Activated naive CD4-positive, alpha-beta T cell treated with anti-CD3 and anti-CD28 coated beads for 36 hours (primary cell): ENCODE measurements at regions of chr7 and their contacts with region 1.

Region 1: GRCh38 chr7:87345166-87345927 is at the start of gene CROT:
- DNase-seq: peak; percentile 97
- H3K4me3 Mint-ChIP-seq: peak within 1 kb of the TSS; percentile 89
- H3K27ac Mint-ChIP-seq: peak within 1 kb of the TSS; percentile 86
- H3K4me1 Mint-ChIP-seq: peaks cover 32% of the 10 kb centered on the region
- H3K27me3 Mint-ChIP-seq: no peaks in the 10 kb centered on the region
- total RNA-seq, gene CROT: 6.0 to 6.1 TPM

Region 2: DNA sequence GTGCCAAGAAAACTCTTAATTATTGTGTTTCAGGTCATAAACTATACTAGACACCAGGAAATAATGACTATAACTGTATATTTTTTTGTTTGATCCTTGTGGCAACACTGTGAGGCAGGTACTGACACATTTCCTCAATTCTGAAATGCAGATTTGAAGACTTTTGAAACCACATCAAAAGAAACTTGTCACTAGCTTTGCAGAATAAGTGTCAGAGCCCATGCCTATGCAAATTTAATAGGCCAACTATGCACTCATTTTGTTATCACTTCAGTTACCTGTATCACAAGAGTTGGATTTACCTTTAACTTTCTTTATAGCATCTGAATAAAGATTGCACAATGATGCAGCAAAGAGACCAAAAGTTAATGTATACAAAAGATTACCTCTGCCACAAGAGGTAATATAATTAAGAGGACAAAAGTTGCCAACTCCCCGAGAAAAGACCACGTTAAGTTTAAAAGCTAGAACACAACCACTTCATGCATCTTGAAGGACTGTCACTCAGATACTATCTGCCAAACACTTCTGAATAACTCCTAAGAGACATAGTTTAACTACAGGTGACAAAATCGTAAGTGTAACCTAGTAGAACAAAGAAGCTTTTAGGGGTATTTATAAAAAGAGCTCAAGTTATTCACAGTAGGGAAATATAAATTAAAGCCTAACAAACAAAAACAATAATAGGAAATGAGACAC is 366.4 kb before region 1 on chr7:
- CTCF ChIA-PET with region 1: no interaction called
- intact Hi-C with region 1: loop called (anchors 2 kb)
- DNase-seq: peak; percentile 13
- H3K4me3 Mint-ChIP-seq: no peak overlapping the region
- H3K27ac Mint-ChIP-seq: peak overlapping the region; percentile 19
- H3K4me1 Mint-ChIP-seq: peaks cover 33% of the 10 kb centered on the region
- H3K27me3 Mint-ChIP-seq: no peaks in the 10 kb centered on the region

Region 3: DNA sequence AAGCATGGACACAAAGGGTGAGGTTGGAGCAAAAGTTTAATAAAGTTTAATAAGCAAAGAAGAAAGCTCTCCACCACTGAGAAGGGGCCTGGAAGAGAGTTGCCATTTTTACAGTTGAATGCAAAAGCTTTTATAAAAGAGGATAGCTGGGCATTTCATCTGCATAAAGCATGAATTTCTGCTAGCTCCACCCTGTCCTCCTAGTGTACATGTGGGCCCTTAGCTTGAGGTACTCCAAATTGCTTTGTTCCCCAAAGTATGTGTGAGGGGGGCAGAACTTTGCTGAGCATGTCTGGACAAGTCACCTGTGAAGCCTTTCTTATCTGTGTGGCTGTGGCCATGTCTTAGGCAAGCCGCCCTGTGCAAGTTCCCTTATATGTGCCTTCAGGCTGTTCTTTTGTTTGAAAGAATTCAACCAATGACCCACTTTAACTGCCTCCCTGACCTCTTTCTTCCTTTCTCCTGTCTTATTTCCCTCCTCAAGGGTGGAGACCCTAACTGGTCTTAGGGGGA is 22.4 kb before region 1 on chr7:
- CTCF ChIA-PET with region 1: no interaction called
- intact Hi-C with region 1: no loop called
- DNase-seq: no peak
- H3K4me3 Mint-ChIP-seq: no peak overlapping the region
- H3K27ac Mint-ChIP-seq: no peak overlapping the region
- H3K4me1 Mint-ChIP-seq: no peaks in the 10 kb centered on the region
- H3K27me3 Mint-ChIP-seq: no peaks in the 10 kb centered on the region

Region 4: DNA sequence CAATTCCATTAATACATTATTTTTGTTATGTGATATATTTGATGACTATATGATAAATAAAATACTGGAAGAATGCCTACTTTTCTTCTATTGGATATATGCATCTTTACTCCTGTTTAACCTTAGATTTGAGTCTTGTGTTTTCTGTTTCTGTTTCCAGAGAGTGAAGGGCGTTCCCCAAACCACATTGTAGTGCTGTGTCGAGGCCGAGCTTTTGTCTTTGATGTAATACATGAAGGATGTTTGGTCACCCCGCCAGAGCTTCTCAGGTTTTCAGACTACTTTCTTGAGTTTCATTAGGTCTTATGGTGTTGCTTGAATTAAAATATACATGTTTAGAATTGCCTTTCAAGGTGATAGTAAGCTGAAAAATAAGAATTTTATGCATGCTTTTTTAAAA is 23.9 kb after region 1 on chr7:
- CTCF ChIA-PET with region 1: interaction called, 3 read pairs
- intact Hi-C with region 1: loop called (anchors 2 kb)
- DNase-seq: peak; percentile 39
- H3K4me3 Mint-ChIP-seq: no peak overlapping the region
- H3K27ac Mint-ChIP-seq: no peak overlapping the region
- H3K4me1 Mint-ChIP-seq: peaks cover 4% of the 10 kb centered on the region
- H3K27me3 Mint-ChIP-seq: no peaks in the 10 kb centered on the region

Region 5: DNA sequence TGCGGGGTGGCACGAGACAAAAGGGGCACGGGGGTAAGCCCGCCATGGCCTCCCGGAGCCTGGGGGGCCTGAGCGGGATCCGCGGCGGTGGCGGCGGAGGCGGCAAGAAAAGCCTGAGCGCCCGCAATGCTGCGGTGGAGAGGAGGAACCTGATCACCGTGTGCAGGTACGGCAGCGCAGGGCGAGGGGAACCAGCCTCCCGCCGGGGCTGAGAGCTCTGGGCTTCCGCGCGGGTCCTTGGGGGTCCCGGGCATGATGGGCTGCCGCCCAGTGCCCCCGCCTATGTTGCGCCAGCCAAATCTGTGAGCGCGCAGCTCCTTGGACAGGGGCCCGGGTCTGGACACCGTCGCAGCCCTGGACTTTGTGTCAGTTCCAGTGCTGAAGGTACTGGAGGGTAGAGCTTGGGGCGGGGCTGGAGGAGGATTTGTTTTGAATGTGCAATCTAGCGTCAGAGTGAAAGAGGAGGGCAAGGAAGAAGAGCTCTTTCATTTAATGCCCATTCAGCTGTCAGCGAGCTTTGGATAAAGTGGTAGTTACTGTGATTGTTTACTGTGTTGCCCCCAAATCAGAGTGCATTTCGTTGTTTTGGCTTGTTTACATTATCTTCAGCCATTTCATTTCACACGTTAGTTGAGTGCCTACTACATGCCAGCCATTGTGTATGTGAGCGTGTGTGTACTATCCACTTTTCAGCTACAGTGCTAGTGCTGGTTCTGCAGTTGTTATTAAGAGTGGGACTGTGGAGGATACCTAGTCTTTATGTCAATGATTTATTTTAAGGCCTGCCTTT is 283.6 kb after region 1 on chr7:
- CTCF ChIA-PET with region 1: no interaction called
- intact Hi-C with region 1: loop called (anchors 2 kb)
- DNase-seq: peak; percentile 33
- H3K4me3 Mint-ChIP-seq: peak overlapping the region; percentile 75
- H3K27ac Mint-ChIP-seq: no peak overlapping the region
- H3K4me1 Mint-ChIP-seq: peaks cover 7% of the 10 kb centered on the region
- H3K27me3 Mint-ChIP-seq: peaks cover 6% of the 10 kb centered on the region